HepG2 (cell line): ENCODE measurements at regions of chr17 and their contacts with region 1.

Region 1: GRCh38 chr17:43360739-43361505 is 37.9 kb upstream of the ARL4D start:
- DNase-seq: peak; percentile 99
- ATAC-seq: peak; percentile 92
- H3K4me3 ChIP-seq: peak overlapping the region; percentile 63 to 71 (median 67)
- H3K27ac ChIP-seq: peak overlapping the region; percentile 98
- H3K4me1 ChIP-seq: peaks cover 28% of the 10 kb centered on the region
- H3K27me3 ChIP-seq: no peaks in the 10 kb centered on the region; a peak in 1 of 5 replicates
- CTCF ChIP-seq: no peak
- EP300 ChIP-seq: peak; percentile 69 to 70
- POLR2A ChIP-seq: peak; percentile 100
- RAD21 ChIP-seq: peak; percentile 99

Region 2: GRCh38 chr17:43217614-43218087 is 143.3 kb before region 1 on chr17:
- CTCF ChIA-PET with region 1: no interaction called
- POLR2A ChIA-PET with region 1: interaction called, 11 read pairs
- in situ Hi-C with region 1: no loop called
- intact Hi-C with region 1: no loop called
- DNase-seq: no peak
- ATAC-seq: peak; percentile 3; the same call in 2 of the 3 replicates
- H3K4me3 ChIP-seq: no peak overlapping the region
- H3K27ac ChIP-seq: peak overlapping the region; percentile 94
- H3K4me1 ChIP-seq: peaks cover 70% of the 10 kb centered on the region
- H3K27me3 ChIP-seq: no peaks in the 10 kb centered on the region
- CTCF ChIP-seq: no peak
- EP300 ChIP-seq: no peak
- POLR2A ChIP-seq: no peak; a peak in 1 of 4 replicates
- RAD21 ChIP-seq: no peak

Region 3: GRCh38 chr17:43377056-43377810 is 16.3 kb after region 1 on chr17:
- CTCF ChIA-PET with region 1: no interaction called
- POLR2A ChIA-PET with region 1: interaction called, 83 read pairs
- in situ Hi-C with region 1: no loop called
- intact Hi-C with region 1: no loop called
- DNase-seq: no peak
- ATAC-seq: peak; percentile 50
- H3K4me3 ChIP-seq: peak overlapping the region in 1 of 3 experiments; percentile 23; a peak in 1 of 6 replicates
- H3K27ac ChIP-seq: no peak overlapping the region
- H3K4me1 ChIP-seq: peaks cover 42% of the 10 kb centered on the region
- H3K27me3 ChIP-seq: no peaks in the 10 kb centered on the region; a peak in 1 of 5 replicates
- CTCF ChIP-seq: no peak
- EP300 ChIP-seq: no peak
- POLR2A ChIP-seq: no peak
- RAD21 ChIP-seq: no peak

Region 4: GRCh38 chr17:43428524-43428923 is 67.6 kb after region 1 on chr17:
- CTCF ChIA-PET with region 1: no interaction called
- POLR2A ChIA-PET with region 1: no interaction called
- in situ Hi-C with region 1: no loop called
- intact Hi-C with region 1: no loop called
- DNase-seq: no peak
- ATAC-seq: no peak
- H3K4me3 ChIP-seq: no peak overlapping the region
- H3K27ac ChIP-seq: no peak overlapping the region
- H3K4me1 ChIP-seq: peaks cover 94% of the 10 kb centered on the region
- H3K27me3 ChIP-seq: no peaks in the 10 kb centered on the region
- CTCF ChIP-seq: no peak
- EP300 ChIP-seq: no peak
- POLR2A ChIP-seq: no peak
- RAD21 ChIP-seq: peak; percentile 19; the same call in 1 of the 2 replicates

Region 5: DNA sequence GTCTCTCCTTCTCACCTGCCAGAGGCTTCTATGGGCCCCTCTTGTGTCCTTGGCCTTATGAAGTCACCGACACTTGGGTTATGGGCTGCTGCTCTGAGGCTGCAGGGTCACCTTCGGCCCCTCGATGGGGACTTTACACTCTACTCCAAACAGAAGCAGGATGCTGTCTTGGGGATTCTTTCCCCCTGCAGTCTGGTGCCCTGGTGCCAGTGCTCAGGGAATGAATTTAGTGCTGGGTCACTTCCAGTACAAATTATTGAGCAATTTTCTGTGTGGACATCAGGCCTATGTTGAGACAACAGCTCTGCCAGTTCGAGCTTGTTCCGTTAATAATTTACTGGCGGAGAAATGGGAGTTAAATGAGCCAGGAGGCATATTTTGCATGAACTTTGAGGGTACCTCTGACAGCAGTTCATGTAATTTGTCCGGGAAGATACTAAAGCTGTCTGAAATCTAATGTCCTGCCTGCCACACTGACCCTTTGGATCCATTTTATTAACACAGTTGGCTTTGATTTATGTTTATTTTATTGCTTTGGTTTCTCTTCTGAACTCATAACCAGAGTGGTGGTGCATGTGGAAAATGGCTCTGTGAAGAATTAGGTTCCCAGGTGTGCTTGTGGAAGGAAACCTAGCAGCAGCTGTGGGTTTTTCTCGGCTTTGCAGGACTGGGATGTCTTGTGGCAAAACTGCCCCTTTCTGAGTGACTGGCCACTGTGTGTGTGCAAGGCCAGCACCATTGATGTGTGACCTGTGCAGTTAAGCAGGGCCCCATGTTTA is 88.7 kb after region 1 on chr17:
- CTCF ChIA-PET with region 1: no interaction called
- POLR2A ChIA-PET with region 1: interaction called, 13 read pairs
- in situ Hi-C with region 1: no loop called
- intact Hi-C with region 1: no loop called
- DNase-seq: peak; percentile 97
- ATAC-seq: peak; percentile 96
- H3K4me3 ChIP-seq: peak overlapping the region; percentile 15 to 52 (median 32); a peak in 5 of 6 replicates
- H3K27ac ChIP-seq: peak overlapping the region; percentile 89
- H3K4me1 ChIP-seq: peaks cover 52% of the 10 kb centered on the region
- H3K27me3 ChIP-seq: no peaks in the 10 kb centered on the region
- CTCF ChIP-seq: peak; percentile 1; the same call in 1 of the 2 replicates
- EP300 ChIP-seq: peak; percentile 82 to 91
- POLR2A ChIP-seq: no peak
- RAD21 ChIP-seq: no peak

Region 6: GRCh38 chr17:43477832-43478634 is 117.1 kb after region 1 on chr17:
- CTCF ChIA-PET with region 1: no interaction called
- POLR2A ChIA-PET with region 1: interaction called, 288 read pairs
- in situ Hi-C with region 1: no loop called
- intact Hi-C with region 1: no loop called
- DNase-seq: peak; percentile 82
- ATAC-seq: peak; percentile 81
- H3K4me3 ChIP-seq: peak overlapping the region; percentile 15 to 54 (median 18); a peak in 5 of 6 replicates
- H3K27ac ChIP-seq: peak overlapping the region; percentile 79
- H3K4me1 ChIP-seq: peaks cover 83% of the 10 kb centered on the region
- H3K27me3 ChIP-seq: no peaks in the 10 kb centered on the region
- CTCF ChIP-seq: no peak
- EP300 ChIP-seq: peak; percentile 52 to 66; a peak in 3 of 4 replicates
- POLR2A ChIP-seq: no peak
- RAD21 ChIP-seq: no peak; the same call in 1 of the 2 replicates

Region 7: GRCh38 chr17:43530278-43531081 is 169.6 kb after region 1 on chr17:
- CTCF ChIA-PET with region 1: no interaction called
- POLR2A ChIA-PET with region 1: interaction called, 17 read pairs
- in situ Hi-C with region 1: no loop called
- intact Hi-C with region 1: no loop called
- DNase-seq: peak; percentile 100
- ATAC-seq: peak; percentile 74
- H3K4me3 ChIP-seq: peak overlapping the region in 2 of 3 experiments; percentile 26 to 58; a peak in 4 of 6 replicates
- H3K27ac ChIP-seq: peak overlapping the region; percentile 96
- H3K4me1 ChIP-seq: peaks cover 97% of the 10 kb centered on the region
- H3K27me3 ChIP-seq: no peaks in the 10 kb centered on the region
- CTCF ChIP-seq: peak; percentile 31; the same call in 1 of the 2 replicates
- EP300 ChIP-seq: peak; percentile 97 to 98
- POLR2A ChIP-seq: peak; percentile 82 to 93
- RAD21 ChIP-seq: peak; percentile 45